PC-9 (cell line): ENCODE measurements at regions of chr20 and their contacts with region 1.

Region 1: DNA sequence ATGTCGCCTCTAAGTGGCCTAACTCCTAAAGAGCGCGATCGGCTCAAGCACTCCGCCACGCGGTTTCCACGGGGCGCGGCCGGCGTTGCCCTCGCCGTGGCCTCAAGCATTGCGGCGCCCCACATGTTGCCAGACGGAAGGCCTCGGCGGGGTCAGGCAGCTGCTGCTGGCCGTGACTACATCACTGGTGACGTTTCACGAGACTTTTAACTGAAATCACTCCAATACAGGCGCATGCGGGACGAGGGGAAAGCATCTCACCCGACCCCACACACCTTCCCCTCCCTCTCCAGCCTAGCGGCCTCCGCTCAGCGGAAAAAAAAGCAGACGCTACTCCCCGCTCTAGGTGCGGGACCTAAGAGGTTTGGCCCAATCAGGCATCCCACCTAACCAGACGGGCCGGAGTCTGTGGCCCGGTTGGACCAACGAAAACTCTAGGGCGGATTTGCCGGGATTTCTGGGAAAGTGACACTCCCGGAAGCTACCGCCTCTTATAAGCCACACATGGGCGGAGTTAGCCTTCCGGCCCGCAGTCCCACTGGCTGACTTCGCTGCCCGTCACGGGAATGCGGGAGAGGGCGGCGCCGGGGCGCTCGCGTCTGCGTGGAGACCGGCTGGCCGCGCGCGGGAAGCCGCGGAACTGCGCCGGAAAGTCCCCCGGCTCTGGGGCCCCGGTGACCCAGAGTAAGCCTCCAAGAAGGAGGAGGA is at the start of gene NXT1:
- DNase-seq: peak; percentile 96 to 98
- H3K4me3 ChIP-seq: peak within 1 kb of the TSS; percentile 91
- H3K27ac ChIP-seq: peak within 1 kb of the TSS; percentile 98
- H3K4me1 ChIP-seq: peaks cover 25% of the 10 kb centered on the region
- H3K27me3 ChIP-seq: no peaks in the 10 kb centered on the region
- CTCF ChIP-seq: no peak
- total RNA-seq, gene NXT1: 29.8 and 30.9 TPM in 2 replicates

Region 2: GRCh38 chr20:22403632-22404361 is 946.6 kb before region 1 on chr20:
- CTCF ChIA-PET with region 1: no interaction called
- POLR2A ChIA-PET with region 1: interaction called, 26 read pairs
- intact Hi-C with region 1: no loop called
- DNase-seq: peak in 1 of 2 experiments; percentile 3
- H3K4me3 ChIP-seq: no peak overlapping the region
- H3K27ac ChIP-seq: no peak overlapping the region
- H3K4me1 ChIP-seq: peaks cover 30% of the 10 kb centered on the region
- H3K27me3 ChIP-seq: no peaks in the 10 kb centered on the region
- CTCF ChIP-seq: no peak

Region 3: GRCh38 chr20:22795871-22796270 is 554.5 kb before region 1 on chr20:
- CTCF ChIA-PET with region 1: no interaction called
- POLR2A ChIA-PET with region 1: no interaction called
- intact Hi-C with region 1: loop called (anchors 10 kb)
- DNase-seq: peak; percentile 74 to 92
- H3K4me3 ChIP-seq: no peak overlapping the region
- H3K27ac ChIP-seq: peak overlapping the region; percentile 93
- H3K4me1 ChIP-seq: peaks cover 58% of the 10 kb centered on the region
- H3K27me3 ChIP-seq: no peaks in the 10 kb centered on the region
- CTCF ChIP-seq: no peak

Region 4: GRCh38 chr20:23079016-23079351 is 271.4 kb before region 1 on chr20:
- CTCF ChIA-PET with region 1: no interaction called
- POLR2A ChIA-PET with region 1: no interaction called
- intact Hi-C with region 1: no loop called
- DNase-seq: no peak
- H3K4me3 ChIP-seq: no peak overlapping the region
- H3K27ac ChIP-seq: no peak overlapping the region
- H3K4me1 ChIP-seq: no peaks in the 10 kb centered on the region
- H3K27me3 ChIP-seq: no peaks in the 10 kb centered on the region
- CTCF ChIP-seq: peak; percentile 47; the same call in 1 of the 2 replicates

Region 5: GRCh38 chr20:23413862-23414422 is 63.6 kb after region 1 on chr20:
- CTCF ChIA-PET with region 1: no interaction called
- POLR2A ChIA-PET with region 1: interaction called, 13 read pairs
- intact Hi-C with region 1: no loop called
- DNase-seq: no peak
- H3K4me3 ChIP-seq: no peak overlapping the region
- H3K27ac ChIP-seq: no peak overlapping the region
- H3K4me1 ChIP-seq: no peaks in the 10 kb centered on the region
- H3K27me3 ChIP-seq: no peaks in the 10 kb centered on the region
- CTCF ChIP-seq: no peak

Region 6: GRCh38 chr20:23622839-23623343 is 272.5 kb after region 1 on chr20:
- CTCF ChIA-PET with region 1: no interaction called
- POLR2A ChIA-PET with region 1: no interaction called
- intact Hi-C with region 1: loop called (anchors 10 kb)
- DNase-seq: peak; percentile 74 to 81
- H3K4me3 ChIP-seq: peak overlapping the region; percentile 42; the same call in 1 of the 2 replicates
- H3K27ac ChIP-seq: peak overlapping the region; percentile 90
- H3K4me1 ChIP-seq: peaks cover 23% of the 10 kb centered on the region
- H3K27me3 ChIP-seq: no peaks in the 10 kb centered on the region
- CTCF ChIP-seq: no peak

Region 7: GRCh38 chr20:24149881-24150307 is 799.5 kb after region 1 on chr20:
- CTCF ChIA-PET with region 1: no interaction called
- POLR2A ChIA-PET with region 1: no interaction called
- intact Hi-C with region 1: no loop called
- DNase-seq: no peak
- H3K4me3 ChIP-seq: no peak overlapping the region
- H3K27ac ChIP-seq: no peak overlapping the region
- H3K4me1 ChIP-seq: peaks cover 20% of the 10 kb centered on the region
- H3K27me3 ChIP-seq: no peaks in the 10 kb centered on the region
- CTCF ChIP-seq: no peak